ENCODE measurements at regions of chr11 and their contacts with region 1.

Region 1: GRCh38 chr11:41461057-41461681 is 1.7 kb upstream of the LRRC4C start:
- DNase-seq: no peak
- H3K4me3 ChIP-seq: no peak overlapping the region
- H3K27ac ChIP-seq: no peak overlapping the region
- H3K4me1 ChIP-seq: no peaks in the 10 kb centered on the region
- H3K27me3 ChIP-seq: peaks cover 5% of the 10 kb centered on the region
- CTCF ChIP-seq: peak; percentile 30 to 73 (median 68)
- POLR2A ChIP-seq: no peak

Region 2: GRCh38 chr11:41784513-41785335 is 323.6 kb after region 1 on chr11:
- intact Hi-C with region 1: no loop called
- DNase-seq: no peak
- H3K4me3 ChIP-seq: no peak overlapping the region
- H3K27ac ChIP-seq: no peak overlapping the region
- H3K4me1 ChIP-seq: no peaks in the 10 kb centered on the region
- H3K27me3 ChIP-seq: no peaks in the 10 kb centered on the region
- CTCF ChIP-seq: no peak
- POLR2A ChIP-seq: no peak

Region 3: DNA sequence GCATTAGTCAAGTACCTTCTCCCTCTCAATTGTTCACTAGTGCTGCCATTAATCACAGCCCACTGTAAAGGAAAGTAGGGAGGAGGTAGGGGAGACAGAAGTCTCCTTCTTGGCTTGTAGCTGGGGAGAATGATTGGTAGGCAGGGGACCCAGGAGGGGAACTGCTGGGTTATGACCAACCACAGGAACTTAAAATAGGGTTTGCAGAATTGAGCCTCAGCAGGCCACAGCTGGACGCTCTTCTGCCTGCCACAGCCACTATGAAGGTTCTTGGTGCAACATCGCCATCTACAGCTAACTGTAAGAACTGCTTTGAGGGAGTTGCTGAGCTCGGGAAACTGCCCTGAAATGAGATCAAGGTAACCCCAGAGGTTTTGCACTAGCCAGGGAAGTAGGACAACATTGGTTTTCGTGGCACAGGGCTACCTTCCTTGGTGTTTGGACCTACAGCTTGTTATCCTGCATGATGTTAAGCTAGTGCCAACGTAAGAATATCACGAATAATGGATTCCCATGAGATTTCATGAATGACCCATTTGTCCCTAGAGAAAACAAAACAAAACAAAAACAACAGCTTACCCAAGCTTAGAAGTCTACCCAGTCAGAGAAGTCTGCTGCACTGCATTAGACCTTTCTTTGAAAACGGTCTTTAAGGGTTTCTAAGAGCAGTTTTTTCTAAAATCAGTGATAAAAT is 1063.5 kb after region 1 on chr11:
- intact Hi-C with region 1: loop called (anchors 5 kb)
- DNase-seq: peak; percentile 39
- H3K4me3 ChIP-seq: no peak overlapping the region
- H3K27ac ChIP-seq: no peak overlapping the region
- H3K4me1 ChIP-seq: no peaks in the 10 kb centered on the region
- H3K27me3 ChIP-seq: no peaks in the 10 kb centered on the region
- CTCF ChIP-seq: peak in 3 of 4 experiments; percentile 53 to 64 (median 54)
- POLR2A ChIP-seq: no peak

Measured in prostate gland (tissue), 2 donors.